ENCODE measurements at regions of chr2 and their contacts with region 1.

Region 1: GRCh38 chr2:110818767-110819481 is 86.6 kb downstream of the ACOXL start:
- DNase-seq: no peak
- ATAC-seq: no peak
- H3K4me3 ChIP-seq: no peak overlapping the region
- H3K27ac ChIP-seq: no peak overlapping the region
- H3K4me1 ChIP-seq: no peaks in the 10 kb centered on the region
- H3K27me3 ChIP-seq: peaks cover 0 to 5% (median 2%) of the 10 kb centered on the region in 7 donors
- CTCF ChIP-seq: no peak

Region 2: DNA sequence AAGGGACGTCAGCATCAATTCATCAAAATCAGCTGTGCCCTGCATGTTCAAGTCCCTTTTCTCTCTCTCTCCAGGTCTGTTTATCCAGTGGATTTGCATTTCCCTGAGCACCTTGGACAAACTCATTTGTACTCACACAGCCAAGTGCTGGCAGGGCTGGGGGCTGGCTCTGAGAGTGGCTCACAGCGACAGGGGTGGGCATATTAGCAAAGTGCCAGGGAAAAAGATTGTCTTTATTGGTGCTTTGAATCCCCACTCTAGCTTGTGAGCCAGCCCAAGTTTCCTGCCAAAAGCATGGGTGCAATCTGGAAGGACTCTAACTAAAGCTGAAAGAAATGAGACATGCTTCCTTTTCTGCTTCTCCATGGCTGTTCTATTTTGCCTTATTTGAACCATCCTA is 29.9 kb before region 1 on chr2:
- intact Hi-C with region 1: no loop called
- DNase-seq: no peak
- ATAC-seq: no peak
- H3K4me3 ChIP-seq: no peak overlapping the region
- H3K27ac ChIP-seq: no peak overlapping the region
- H3K4me1 ChIP-seq: no peaks in the 10 kb centered on the region
- H3K27me3 ChIP-seq: peaks cover 0 to 20% (median 4%) of the 10 kb centered on the region in 7 donors
- CTCF ChIP-seq: no peak

Region 3: GRCh38 chr2:110858135-110858725 is 39.3 kb after region 1 on chr2:
- intact Hi-C with region 1: no loop called
- DNase-seq: no peak
- ATAC-seq: peak in 1 of 8 donors; percentile 55
- H3K4me3 ChIP-seq: no peak overlapping the region
- H3K27ac ChIP-seq: no peak overlapping the region
- H3K4me1 ChIP-seq: peaks cover 0 to 3% (median 0%) of the 10 kb centered on the region in 9 donors
- H3K27me3 ChIP-seq: peaks cover 0 to 50% (median 33%) of the 10 kb centered on the region in 7 donors
- CTCF ChIP-seq: no peak

Region 4: GRCh38 chr2:111091811-111092211 is 272.9 kb after region 1 on chr2:
- intact Hi-C with region 1: loop called in 1 of 10 experiments (anchors 10 kb)
- DNase-seq: no peak
- ATAC-seq: no peak
- H3K4me3 ChIP-seq: no peak overlapping the region
- H3K27ac ChIP-seq: no peak overlapping the region
- H3K4me1 ChIP-seq: no peaks in the 10 kb centered on the region
- H3K27me3 ChIP-seq: peaks cover 0 to 12% (median 0%) of the 10 kb centered on the region in 7 donors
- CTCF ChIP-seq: no peak